ENCODE measurements at regions of chr15 and their contacts with region 1.

Region 1: DNA sequence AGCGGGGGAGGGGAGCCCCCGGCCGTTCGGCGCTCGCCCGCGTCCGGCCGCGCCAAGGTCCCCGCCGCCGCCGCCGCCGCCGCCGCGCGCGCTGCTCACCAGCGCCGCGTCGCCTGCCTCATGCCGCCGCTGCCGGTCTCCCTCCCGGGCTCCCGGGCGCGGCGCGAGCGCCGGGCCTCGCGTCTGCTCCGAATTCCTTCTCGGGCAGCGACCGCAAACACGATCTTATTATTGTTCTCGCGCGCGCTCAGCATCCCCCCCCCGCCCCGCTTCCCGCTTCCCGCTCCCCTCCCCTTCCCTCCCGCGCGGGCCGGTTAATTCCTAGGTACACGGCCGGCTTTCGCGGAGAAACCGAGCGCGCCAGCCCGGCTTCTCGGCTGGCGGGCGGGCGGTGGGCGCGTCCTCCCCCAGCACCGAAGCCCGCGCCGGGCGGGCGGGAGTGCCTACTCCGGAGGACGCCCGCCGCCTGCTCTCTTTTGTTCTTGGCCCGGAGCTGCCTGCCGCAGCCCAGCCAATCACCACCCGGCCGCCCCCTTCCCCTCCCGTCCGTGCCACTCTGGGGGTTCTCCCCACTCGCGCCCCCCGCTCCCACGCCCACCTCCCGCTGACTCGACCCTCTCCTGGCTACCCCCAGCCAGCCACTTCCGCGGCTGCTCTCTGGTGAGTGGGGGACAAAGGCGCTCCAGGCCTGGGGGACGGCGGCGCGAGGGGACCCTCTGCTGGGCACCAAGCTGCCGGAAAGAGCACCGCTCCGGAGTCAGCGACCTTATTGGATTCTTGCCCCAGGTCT is at the start of gene HDGFL3:
- DNase-seq: peak in 1 of 2 experiments; percentile 9
- H3K4me3 ChIP-seq: no peak within 1 kb of the TSS
- H3K27ac ChIP-seq: no peak within 1 kb of the TSS
- H3K4me1 ChIP-seq: peaks cover 4% of the 10 kb centered on the region; the same call in 1 of the 2 replicates
- H3K27me3 ChIP-seq: no peaks in the 10 kb centered on the region
- CTCF ChIP-seq: no peak
- total RNA-seq, gene HDGFL3: 10.1 TPM in 2 replicates

Region 2: DNA sequence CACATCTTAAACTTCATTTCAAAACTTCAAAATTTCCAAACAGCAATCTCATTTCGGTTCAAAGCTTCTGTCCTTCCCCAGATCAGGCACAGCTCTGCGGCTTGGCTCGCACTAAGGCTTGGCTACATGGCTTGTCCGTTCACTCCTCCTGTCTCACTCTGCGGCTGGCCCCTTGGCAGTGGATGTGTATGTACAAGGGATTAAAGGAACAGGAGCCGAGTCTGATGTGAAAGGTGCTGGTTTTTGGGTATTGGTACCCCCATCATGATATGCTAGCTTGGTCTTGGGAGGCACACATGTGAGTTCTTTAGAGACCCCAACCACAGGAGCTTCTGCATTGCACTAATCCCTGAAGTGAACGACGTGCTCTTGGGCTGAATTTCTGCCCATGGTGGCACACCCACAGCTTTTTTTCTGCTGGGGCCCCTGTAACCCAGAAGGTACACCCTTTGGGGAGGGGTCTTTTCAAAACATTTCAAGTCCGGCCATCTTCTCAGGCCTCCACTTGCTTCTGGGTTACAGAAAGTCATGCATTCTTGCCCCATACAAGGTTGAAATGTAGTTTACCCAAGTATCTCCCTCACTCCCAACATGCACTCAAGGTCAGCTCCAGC is 87.7 kb before region 1 on chr15:
- CTCF ChIA-PET with region 1: interaction called, 11 read pairs
- POLR2A ChIA-PET with region 1: no interaction called
- intact Hi-C with region 1: no loop called
- DNase-seq: no peak
- H3K4me3 ChIP-seq: no peak overlapping the region
- H3K27ac ChIP-seq: no peak overlapping the region
- H3K4me1 ChIP-seq: no peaks in the 10 kb centered on the region
- H3K27me3 ChIP-seq: no peaks in the 10 kb centered on the region
- CTCF ChIP-seq: no peak

Region 3: GRCh38 chr15:83248151-83249029 is 40.6 kb after region 1 on chr15:
- CTCF ChIA-PET with region 1: no interaction called
- POLR2A ChIA-PET with region 1: no interaction called
- intact Hi-C with region 1: no loop called
- DNase-seq: peak; percentile 34 to 55
- H3K4me3 ChIP-seq: no peak overlapping the region
- H3K27ac ChIP-seq: peak overlapping the region; percentile 7; the same call in 1 of the 2 replicates
- H3K4me1 ChIP-seq: peaks cover 17% of the 10 kb centered on the region
- H3K27me3 ChIP-seq: no peaks in the 10 kb centered on the region
- CTCF ChIP-seq: peak; percentile 98